Panc1 (cell line): ENCODE measurements at regions of chr1 and their contacts with region 1.

Region 1: GRCh38 chr1:20479840-20480239 is 6.2 kb downstream of the CAMK2N1 start:
- DNase-seq: no peak
- ATAC-seq: no peak
- H3K4me3 ChIP-seq: no peak overlapping the region
- H3K27ac ChIP-seq: no peak overlapping the region
- H3K4me1 ChIP-seq: peaks cover 20% of the 10 kb centered on the region
- H3K27me3 ChIP-seq: peaks cover 4% of the 10 kb centered on the region; the same call in 1 of the 2 replicates
- CTCF ChIP-seq: no peak

Region 2: GRCh38 chr1:20248971-20249612 is 230.7 kb before region 1 on chr1:
- CTCF ChIA-PET with region 1: interaction called, 10 read pairs
- POLR2A ChIA-PET with region 1: no interaction called
- in situ Hi-C with region 1: no loop called
- intact Hi-C with region 1: no loop called
- DNase-seq: no peak
- ATAC-seq: no peak
- H3K4me3 ChIP-seq: no peak overlapping the region
- H3K27ac ChIP-seq: no peak overlapping the region
- H3K4me1 ChIP-seq: peaks cover 4% of the 10 kb centered on the region; the same call in 1 of the 2 replicates
- H3K27me3 ChIP-seq: peaks cover 6% of the 10 kb centered on the region; the same call in 1 of the 2 replicates
- CTCF ChIP-seq: no peak